Calu3 (cell line): ENCODE measurements at regions of chr5 and their contacts with region 1.

Region 1: DNA sequence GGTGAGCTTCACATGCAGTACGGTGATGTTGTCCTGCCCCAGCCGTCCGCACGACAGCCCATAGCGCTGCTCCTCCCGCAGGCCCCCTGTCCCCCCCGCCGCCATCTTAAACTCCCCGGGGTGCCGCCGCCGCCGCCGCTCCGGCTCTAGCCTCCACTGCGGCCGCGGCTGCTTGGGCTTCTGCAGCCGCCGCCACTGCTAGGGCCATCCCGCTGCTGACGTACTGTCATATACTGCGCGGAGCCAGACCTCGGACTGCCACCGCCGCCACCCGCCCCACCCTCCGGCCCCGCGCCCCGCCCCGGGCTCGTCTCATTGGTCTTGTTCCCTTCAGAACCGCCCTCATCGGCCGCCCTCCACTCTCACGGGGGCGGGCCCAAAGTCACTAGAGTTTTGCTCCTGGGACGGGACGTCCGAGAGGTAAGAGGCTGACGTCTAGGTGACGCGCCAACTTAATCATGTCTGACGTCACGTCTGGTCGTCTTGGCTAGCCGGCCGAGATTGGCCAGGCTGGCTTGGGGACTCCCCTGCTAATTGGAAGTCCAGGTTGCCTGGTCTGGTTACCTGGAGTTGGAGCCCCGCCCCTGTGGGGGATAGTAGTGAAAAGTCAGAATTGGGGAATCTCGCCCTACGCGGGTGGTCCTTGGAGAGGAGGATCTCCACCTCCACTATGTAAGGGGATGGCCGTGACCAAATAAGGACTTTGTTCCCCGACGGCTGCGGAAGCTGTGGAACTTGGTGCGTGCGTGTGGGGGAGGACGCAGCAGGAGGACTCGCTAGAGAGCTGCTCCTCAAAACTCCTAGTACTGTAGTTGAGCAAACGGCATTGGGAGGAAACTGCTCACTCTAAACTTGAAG is at the start of gene ELL2:
- DNase-seq: peak; percentile 99
- H3K4me3 Mint-ChIP-seq: peak within 1 kb of the TSS; percentile 92
- H3K27ac Mint-ChIP-seq: peak within 1 kb of the TSS; percentile 98
- H3K4me1 Mint-ChIP-seq: peaks cover 61% of the 10 kb centered on the region
- H3K27me3 Mint-ChIP-seq: no peaks in the 10 kb centered on the region
- CTCF ChIP-seq: no peak
- total RNA-seq, gene ELL2: 56.2 and 57.7 TPM in 2 replicates

Region 2: DNA sequence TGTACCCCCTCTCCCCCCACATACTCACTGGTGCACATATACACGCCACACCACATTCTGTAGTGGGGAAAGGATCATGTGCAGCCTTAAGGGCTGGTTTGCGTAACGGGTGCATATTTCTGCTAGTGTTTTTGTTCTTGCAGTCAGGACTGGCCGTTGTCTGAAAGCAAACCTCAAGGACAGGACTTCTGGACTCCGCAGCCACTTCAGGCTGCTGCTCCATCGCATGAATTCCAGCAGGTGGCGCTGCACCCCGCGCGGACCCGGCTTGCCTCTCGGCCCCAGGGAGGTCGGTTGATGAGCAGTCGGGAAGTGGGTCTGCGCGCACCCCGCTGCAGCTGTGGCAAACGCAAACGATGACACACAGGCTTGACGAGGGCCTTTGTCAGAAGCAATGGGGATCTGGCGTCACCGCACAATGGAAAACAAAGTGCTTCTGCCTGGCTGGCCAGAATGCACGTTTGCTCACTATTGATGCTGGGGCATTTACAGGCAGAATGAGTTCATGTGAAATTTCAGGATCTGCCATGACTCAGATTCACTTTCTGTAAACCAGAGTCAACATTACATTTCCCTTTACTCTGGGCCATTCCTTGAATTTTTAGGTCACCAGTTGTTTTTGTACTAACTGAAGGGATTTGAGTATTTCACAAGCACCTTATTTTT is 103.1 kb before region 1 on chr5:
- CTCF ChIA-PET with region 1: no interaction called
- intact Hi-C with region 1: loop called (anchors 1 kb)
- DNase-seq: peak; percentile 95
- H3K4me3 Mint-ChIP-seq: peak overlapping the region; percentile 63
- H3K27ac Mint-ChIP-seq: peak overlapping the region; percentile 80
- H3K4me1 Mint-ChIP-seq: peaks cover 48% of the 10 kb centered on the region
- H3K27me3 Mint-ChIP-seq: no peaks in the 10 kb centered on the region
- CTCF ChIP-seq: peak; percentile 98

Region 3: DNA sequence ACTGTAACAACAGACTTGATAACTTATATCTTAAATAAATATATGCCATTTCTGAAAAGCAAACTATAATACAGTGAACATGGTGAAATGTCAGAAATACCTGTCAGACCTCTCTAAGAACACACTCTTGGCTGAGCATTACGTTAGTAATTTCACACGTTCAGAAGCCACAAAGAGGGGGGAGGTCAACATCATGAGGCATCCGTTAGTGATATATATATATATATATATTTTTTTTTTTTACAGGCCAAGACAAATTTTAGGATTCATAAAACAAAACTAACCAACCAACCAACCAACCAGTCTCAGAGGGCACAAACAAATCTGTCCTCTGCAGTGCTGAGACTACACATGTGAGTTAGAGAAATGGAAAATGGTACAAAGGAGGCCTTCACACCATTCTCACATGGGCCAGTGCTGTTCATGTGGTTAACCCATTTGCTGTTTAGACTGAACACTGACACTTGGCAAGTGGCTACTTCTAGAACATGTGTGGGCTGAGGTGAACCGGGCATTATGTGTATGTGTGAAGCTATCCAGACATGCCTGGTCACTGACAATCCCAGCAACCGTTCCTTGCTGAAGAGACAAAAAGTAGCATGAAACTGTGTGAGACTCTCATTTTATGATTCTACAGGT is 54.7 kb before region 1 on chr5:
- CTCF ChIA-PET with region 1: no interaction called
- intact Hi-C with region 1: loop called (anchors 5 kb)
- DNase-seq: no peak
- H3K4me3 Mint-ChIP-seq: no peak overlapping the region
- H3K27ac Mint-ChIP-seq: no peak overlapping the region
- H3K4me1 Mint-ChIP-seq: peaks cover 20% of the 10 kb centered on the region
- H3K27me3 Mint-ChIP-seq: no peaks in the 10 kb centered on the region
- CTCF ChIP-seq: no peak

Region 4: DNA sequence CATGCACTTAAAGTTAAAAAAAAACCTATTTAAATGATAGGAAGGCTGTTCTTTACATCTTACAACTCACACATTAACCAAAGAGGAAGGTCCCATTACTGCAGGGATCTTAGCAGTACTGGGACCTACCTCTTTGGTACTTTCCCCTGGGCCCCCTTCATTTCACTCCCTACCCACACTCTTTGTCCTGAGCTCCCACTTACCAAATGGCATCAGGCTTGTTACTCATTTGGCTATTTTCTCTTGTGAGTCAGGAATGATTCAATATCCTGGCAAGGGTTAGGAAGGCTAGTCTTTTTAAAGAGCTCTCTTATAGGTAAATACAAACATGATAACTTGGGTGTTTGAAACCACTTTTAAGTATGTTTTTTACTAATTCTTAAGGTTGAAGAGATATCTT is 117.2 kb after region 1 on chr5:
- CTCF ChIA-PET with region 1: interaction called, 7 read pairs
- intact Hi-C with region 1: loop called (anchors 5 kb)
- DNase-seq: no peak
- H3K4me3 Mint-ChIP-seq: no peak overlapping the region
- H3K27ac Mint-ChIP-seq: peak overlapping the region; percentile 94
- H3K4me1 Mint-ChIP-seq: peaks cover 60% of the 10 kb centered on the region
- H3K27me3 Mint-ChIP-seq: no peaks in the 10 kb centered on the region
- CTCF ChIP-seq: no peak

Region 5: GRCh38 chr5:96177303-96177869 is 215.5 kb after region 1 on chr5:
- CTCF ChIA-PET with region 1: no interaction called
- intact Hi-C with region 1: loop called (anchors 2 kb)
- DNase-seq: peak; percentile 55
- H3K4me3 Mint-ChIP-seq: peak overlapping the region; percentile 48
- H3K27ac Mint-ChIP-seq: peak overlapping the region; percentile 68
- H3K4me1 Mint-ChIP-seq: peaks cover 51% of the 10 kb centered on the region
- H3K27me3 Mint-ChIP-seq: no peaks in the 10 kb centered on the region
- CTCF ChIP-seq: no peak